Activated CD8-positive, alpha-beta T cell treated with anti-CD3 and anti-CD28 coated beads for 36 hours (primary cell): ENCODE measurements at regions of chr13 and their contacts with region 1.

Region 1: DNA sequence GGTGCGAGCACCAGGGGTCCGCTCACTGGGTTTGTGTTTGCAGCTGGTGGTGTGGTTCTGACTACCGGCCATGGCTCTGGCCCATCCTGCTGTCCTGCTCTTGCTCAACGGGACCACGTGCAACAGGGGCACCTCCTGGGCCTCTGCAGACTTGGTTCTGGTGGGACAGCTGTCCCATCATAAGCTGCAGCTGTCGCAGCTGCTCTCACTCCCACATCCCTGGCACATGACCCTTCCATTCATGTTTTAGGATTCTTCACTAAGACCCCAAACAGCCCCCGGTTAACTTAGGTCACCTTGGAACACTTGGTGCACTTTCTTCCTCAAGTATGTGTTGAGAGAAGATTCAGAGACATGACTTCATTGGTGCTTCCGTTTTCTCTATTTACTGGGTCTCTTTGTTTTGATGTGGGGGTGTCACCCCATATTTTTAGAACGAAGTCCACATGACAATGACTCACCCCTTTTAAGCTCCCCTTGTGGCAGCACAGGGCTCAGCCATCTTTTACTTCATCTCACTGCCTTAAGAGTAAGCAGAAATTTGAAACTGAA is 68.4 kb upstream of the ARHGEF7 start:
- DNase-seq: no peak
- ATAC-seq: peak; percentile 65
- H3K4me3 Mint-ChIP-seq: no peak overlapping the region
- H3K27ac Mint-ChIP-seq: no peak overlapping the region
- H3K4me1 Mint-ChIP-seq: peaks cover 5% of the 10 kb centered on the region
- H3K27me3 Mint-ChIP-seq: peaks cover 4% of the 10 kb centered on the region
- CTCF ChIP-seq: no peak

Region 2: GRCh38 chr13:110944121-110944967 is 102.3 kb before region 1 on chr13:
- CTCF ChIA-PET with region 1: no interaction called
- POLR2A ChIA-PET with region 1: no interaction called
- intact Hi-C with region 1: loop called (anchors 10 kb)
- DNase-seq: peak; percentile 43
- ATAC-seq: peak; percentile 73
- H3K4me3 Mint-ChIP-seq: no peak overlapping the region
- H3K27ac Mint-ChIP-seq: no peak overlapping the region
- H3K4me1 Mint-ChIP-seq: peaks cover 25% of the 10 kb centered on the region
- H3K27me3 Mint-ChIP-seq: no peaks in the 10 kb centered on the region
- CTCF ChIP-seq: peak; percentile 48